ENCODE measurements at regions of chr7 and their contacts with region 1.

Region 1: GRCh38 chr7:132249614-132249972 is 326.7 kb downstream of the PLXNA4 start:
- DNase-seq: peak in 2 of 3 donors; percentile 51 to 63
- ATAC-seq: peak; percentile 61 to 66
- H3K4me3 ChIP-seq: no peak overlapping the region
- H3K27ac ChIP-seq: no peak overlapping the region
- H3K4me1 ChIP-seq: peaks cover 2% of the 10 kb centered on the region
- H3K27me3 ChIP-seq: no peaks in the 10 kb centered on the region

Region 2: GRCh38 chr7:131995328-131995727 is 254.3 kb before region 1 on chr7:
- intact Hi-C with region 1: loop called in 3 of 4 experiments (anchors 10 kb)
- DNase-seq: no peak
- ATAC-seq: no peak
- H3K4me3 ChIP-seq: no peak overlapping the region
- H3K27ac ChIP-seq: no peak overlapping the region
- H3K4me1 ChIP-seq: no peaks in the 10 kb centered on the region
- H3K27me3 ChIP-seq: no peaks in the 10 kb centered on the region

Region 3: GRCh38 chr7:132004536-132005272 is 244.9 kb before region 1 on chr7:
- intact Hi-C with region 1: loop called in 3 of 4 experiments (anchors 10 kb)
- DNase-seq: peak; percentile 25 to 66 (median 60)
- ATAC-seq: peak; percentile 80 to 81
- H3K4me3 ChIP-seq: no peak overlapping the region
- H3K27ac ChIP-seq: no peak overlapping the region
- H3K4me1 ChIP-seq: no peaks in the 10 kb centered on the region
- H3K27me3 ChIP-seq: no peaks in the 10 kb centered on the region

Region 4: GRCh38 chr7:132183781-132184420 is 65.7 kb before region 1 on chr7:
- intact Hi-C with region 1: no loop called
- DNase-seq: no peak
- ATAC-seq: no peak
- H3K4me3 ChIP-seq: no peak overlapping the region
- H3K27ac ChIP-seq: no peak overlapping the region
- H3K4me1 ChIP-seq: no peaks in the 10 kb centered on the region
- H3K27me3 ChIP-seq: no peaks in the 10 kb centered on the region